ENCODE measurements at regions of chr3 and their contacts with region 1.

Region 1: DNA sequence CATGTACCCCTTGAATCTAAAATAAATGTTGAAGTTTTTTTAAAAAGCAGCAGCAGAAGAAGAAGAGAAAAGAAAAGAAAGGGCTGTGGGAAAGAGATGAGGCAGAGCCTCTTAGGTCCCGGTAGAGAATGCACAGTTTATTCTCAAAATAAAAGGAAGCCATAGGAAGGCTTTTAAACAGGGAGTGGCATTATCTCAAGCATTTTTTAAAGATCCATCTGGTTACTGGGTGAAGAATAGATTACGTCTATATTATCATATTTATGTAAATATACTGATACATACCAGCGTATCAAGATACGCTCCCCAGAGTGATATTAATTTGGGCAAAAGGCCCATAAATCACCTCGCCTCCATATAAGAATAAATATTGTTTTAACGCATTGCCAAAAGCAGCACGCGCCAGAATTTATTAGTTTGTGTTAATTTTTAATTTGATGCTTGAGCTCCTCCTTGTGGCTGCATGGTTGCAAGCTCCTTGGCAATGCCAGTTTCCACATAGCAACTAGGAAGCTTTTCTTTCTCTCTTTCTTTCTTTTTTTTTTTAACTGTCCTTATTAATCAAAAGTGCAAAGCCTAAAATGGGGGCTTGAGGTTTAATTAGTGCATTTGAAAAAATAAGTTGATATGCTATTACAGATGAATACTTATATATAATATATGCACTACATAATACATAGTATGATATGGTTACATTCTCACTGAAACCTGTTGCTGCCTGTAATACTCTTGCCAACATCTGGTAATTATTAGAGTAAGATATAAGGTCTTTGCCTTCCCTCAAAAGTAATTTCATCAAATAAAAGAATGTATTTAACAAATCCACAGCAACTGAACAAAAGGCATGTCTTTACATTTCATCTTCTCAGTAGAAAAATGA is 242.8 kb upstream of the UBE2E2 start:
- DNase-seq: peak; percentile 74
- ATAC-seq: peak; percentile 66
- H3K4me3 ChIP-seq: no peak overlapping the region
- H3K27ac ChIP-seq: no peak overlapping the region
- H3K4me1 ChIP-seq: no peaks in the 10 kb centered on the region
- H3K27me3 ChIP-seq: no peaks in the 10 kb centered on the region
- CTCF ChIP-seq: peak; percentile 92

Region 2: DNA sequence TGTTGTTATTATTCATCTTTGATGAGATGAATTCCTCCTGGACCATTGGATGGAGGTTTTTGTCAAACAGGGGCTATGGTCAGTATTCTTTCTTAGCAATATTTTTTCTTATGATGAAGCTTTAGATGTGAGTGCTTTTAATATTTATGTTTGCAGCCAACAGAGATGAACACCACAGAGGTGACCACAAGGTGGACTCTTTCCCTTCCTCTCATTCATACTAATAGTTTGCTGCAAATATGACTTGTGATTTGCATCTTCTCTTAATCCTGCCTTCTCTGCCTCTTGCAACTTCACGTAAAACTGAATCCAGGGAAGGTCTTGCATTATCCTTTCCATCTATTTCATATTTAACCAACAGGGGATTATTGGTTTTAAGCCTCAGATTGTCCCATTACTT is 230.4 kb before region 1 on chr3:
- CTCF ChIA-PET with region 1: no interaction called
- POLR2A ChIA-PET with region 1: no interaction called
- intact Hi-C with region 1: loop called (anchors 1 kb)
- DNase-seq: peak; percentile 48
- ATAC-seq: peak; percentile 86
- H3K4me3 ChIP-seq: no peak overlapping the region
- H3K27ac ChIP-seq: no peak overlapping the region
- H3K4me1 ChIP-seq: peaks cover 10% of the 10 kb centered on the region
- H3K27me3 ChIP-seq: no peaks in the 10 kb centered on the region
- CTCF ChIP-seq: peak; percentile 64

Region 3: DNA sequence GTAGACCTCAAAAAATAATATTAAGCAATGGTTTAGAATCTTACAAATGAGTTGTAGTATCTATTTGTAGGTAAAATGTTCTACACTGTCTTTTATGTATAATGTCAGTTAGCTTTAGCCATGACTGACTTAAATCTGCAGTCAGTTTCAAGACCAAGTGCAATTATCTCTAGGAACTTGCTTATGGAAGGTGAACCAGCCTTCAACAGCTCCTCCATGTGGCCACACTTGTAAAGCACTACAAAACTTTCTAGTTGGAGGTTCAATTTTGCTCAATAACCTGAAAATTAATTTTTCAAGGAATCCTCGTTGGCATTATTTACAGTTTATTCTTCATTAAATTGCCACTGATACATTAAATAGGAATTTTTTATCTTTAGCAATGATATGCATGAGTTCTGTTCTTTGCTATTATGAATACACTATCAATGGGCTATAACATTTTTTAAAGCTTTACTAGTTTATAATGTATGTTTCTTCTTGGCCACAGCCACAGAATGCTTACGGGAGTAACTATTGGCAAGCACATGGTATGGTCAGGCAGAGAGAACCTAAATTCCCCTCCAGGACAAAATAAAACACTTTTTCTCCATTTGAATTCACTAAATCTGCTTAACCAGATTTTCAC is 72.6 kb before region 1 on chr3:
- CTCF ChIA-PET with region 1: interaction called, 4 read pairs
- POLR2A ChIA-PET with region 1: no interaction called
- intact Hi-C with region 1: loop called (anchors 2 kb)
- DNase-seq: peak; percentile 59
- ATAC-seq: peak; percentile 70
- H3K4me3 ChIP-seq: no peak overlapping the region
- H3K27ac ChIP-seq: no peak overlapping the region
- H3K4me1 ChIP-seq: peaks cover 10% of the 10 kb centered on the region
- H3K27me3 ChIP-seq: peaks cover 22% of the 10 kb centered on the region
- CTCF ChIP-seq: peak; percentile 90

Region 4: DNA sequence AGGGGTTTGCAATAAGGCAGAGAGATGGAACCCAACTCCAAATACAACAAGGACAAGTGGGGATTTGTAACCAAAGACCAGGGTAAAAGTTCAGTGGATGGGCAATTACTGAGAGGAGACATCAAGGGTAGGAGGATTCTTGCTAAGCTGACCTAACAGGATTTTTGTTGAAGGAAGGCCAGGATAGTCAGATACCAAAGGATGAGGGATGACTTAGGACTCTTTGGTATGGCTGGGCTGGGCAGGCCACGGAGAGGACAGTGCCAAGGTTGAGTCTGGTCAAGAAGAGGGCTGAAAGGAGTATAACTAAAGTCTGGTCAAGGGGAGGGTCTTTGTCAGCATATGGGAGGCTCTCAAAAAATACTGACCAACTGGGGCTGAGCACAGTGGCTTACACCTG is 157.5 kb after region 1 on chr3:
- CTCF ChIA-PET with region 1: no interaction called
- POLR2A ChIA-PET with region 1: no interaction called
- intact Hi-C with region 1: no loop called
- DNase-seq: no peak
- ATAC-seq: no peak
- H3K4me3 ChIP-seq: no peak overlapping the region
- H3K27ac ChIP-seq: no peak overlapping the region
- H3K4me1 ChIP-seq: peaks cover 39% of the 10 kb centered on the region
- H3K27me3 ChIP-seq: peaks cover 23% of the 10 kb centered on the region
- CTCF ChIP-seq: no peak

Region 5: GRCh38 chr3:23161896-23162570 is 201.7 kb after region 1 on chr3:
- CTCF ChIA-PET with region 1: interaction called, 4 read pairs
- POLR2A ChIA-PET with region 1: no interaction called
- intact Hi-C with region 1: loop called (anchors 10 kb)
- DNase-seq: peak; percentile 73
- ATAC-seq: peak; percentile 67
- H3K4me3 ChIP-seq: peak overlapping the region; percentile 38
- H3K27ac ChIP-seq: peak overlapping the region; percentile 37
- H3K4me1 ChIP-seq: peaks cover 43% of the 10 kb centered on the region
- H3K27me3 ChIP-seq: no peaks in the 10 kb centered on the region
- CTCF ChIP-seq: no peak

Measured in PC-3 (cell line).